ENCODE measurements at regions of chr6 and their contacts with region 1.

Region 1: GRCh38 chr6:158704181-158704822 is 54.4 kb downstream of the SYTL3 start:
- DNase-seq: peak; percentile 67 to 82 (median 72)
- H3K4me3 ChIP-seq: peak overlapping the region; percentile 39 to 57
- H3K4me3 Mint-ChIP-seq: peak overlapping the region; percentile 82 to 89 (median 83)
- H3K27ac ChIP-seq: no peak overlapping the region
- H3K27ac Mint-ChIP-seq: peak overlapping the region; percentile 41 to 90 (median 79)
- H3K4me1 ChIP-seq: peaks cover 10% of the 10 kb centered on the region
- H3K4me1 Mint-ChIP-seq: peaks cover 9 to 21% (median 15%) of the 10 kb centered on the region in 4 donors
- H3K27me3 ChIP-seq: no peaks in the 10 kb centered on the region
- H3K27me3 Mint-ChIP-seq: no peaks in the 10 kb centered on the region

Region 2: GRCh38 chr6:158103228-158103627 is 601.1 kb before region 1 on chr6:
- CTCF ChIA-PET with region 1: no interaction called
- POLR2A ChIA-PET with region 1: no interaction called
- intact Hi-C with region 1: no loop called
- DNase-seq: no peak
- H3K4me3 ChIP-seq: no peak overlapping the region
- H3K4me3 Mint-ChIP-seq: no peak overlapping the region
- H3K27ac ChIP-seq: no peak overlapping the region
- H3K27ac Mint-ChIP-seq: no peak overlapping the region
- H3K4me1 ChIP-seq: no peaks in the 10 kb centered on the region
- H3K4me1 Mint-ChIP-seq: no peaks in the 10 kb centered on the region
- H3K27me3 ChIP-seq: no peaks in the 10 kb centered on the region
- H3K27me3 Mint-ChIP-seq: no peaks in the 10 kb centered on the region

Region 3: GRCh38 chr6:158667360-158667981 is 36.8 kb before region 1 on chr6:
- CTCF ChIA-PET with region 1: no interaction called
- POLR2A ChIA-PET with region 1: no interaction called
- intact Hi-C with region 1: no loop called
- DNase-seq: no peak
- H3K4me3 ChIP-seq: no peak overlapping the region
- H3K4me3 Mint-ChIP-seq: no peak overlapping the region
- H3K27ac ChIP-seq: no peak overlapping the region
- H3K27ac Mint-ChIP-seq: peak overlapping the region in 1 of 7 donors; percentile 77
- H3K4me1 ChIP-seq: no peaks in the 10 kb centered on the region
- H3K4me1 Mint-ChIP-seq: peaks cover 4 to 7% (median 6%) of the 10 kb centered on the region in 4 donors
- H3K27me3 ChIP-seq: no peaks in the 10 kb centered on the region
- H3K27me3 Mint-ChIP-seq: no peaks in the 10 kb centered on the region

Region 4: GRCh38 chr6:158958504-158959386 is 254.4 kb after region 1 on chr6:
- CTCF ChIA-PET with region 1: interaction called, 18 read pairs
- POLR2A ChIA-PET with region 1: no interaction called
- intact Hi-C with region 1: loop called (anchors 1 kb)
- DNase-seq: peak in 4 of 5 donors; percentile 13 to 26 (median 24)
- H3K4me3 ChIP-seq: no peak overlapping the region
- H3K4me3 Mint-ChIP-seq: no peak overlapping the region
- H3K27ac ChIP-seq: no peak overlapping the region
- H3K27ac Mint-ChIP-seq: peak overlapping the region in 3 of 7 donors; percentile 1 to 59 (median 52)
- H3K4me1 ChIP-seq: no peaks in the 10 kb centered on the region
- H3K4me1 Mint-ChIP-seq: peaks cover 0 to 13% (median 0%) of the 10 kb centered on the region in 4 donors
- H3K27me3 ChIP-seq: no peaks in the 10 kb centered on the region
- H3K27me3 Mint-ChIP-seq: no peaks in the 10 kb centered on the region